ENCODE measurements at regions of chr5 and their contacts with region 1.

Region 1: DNA sequence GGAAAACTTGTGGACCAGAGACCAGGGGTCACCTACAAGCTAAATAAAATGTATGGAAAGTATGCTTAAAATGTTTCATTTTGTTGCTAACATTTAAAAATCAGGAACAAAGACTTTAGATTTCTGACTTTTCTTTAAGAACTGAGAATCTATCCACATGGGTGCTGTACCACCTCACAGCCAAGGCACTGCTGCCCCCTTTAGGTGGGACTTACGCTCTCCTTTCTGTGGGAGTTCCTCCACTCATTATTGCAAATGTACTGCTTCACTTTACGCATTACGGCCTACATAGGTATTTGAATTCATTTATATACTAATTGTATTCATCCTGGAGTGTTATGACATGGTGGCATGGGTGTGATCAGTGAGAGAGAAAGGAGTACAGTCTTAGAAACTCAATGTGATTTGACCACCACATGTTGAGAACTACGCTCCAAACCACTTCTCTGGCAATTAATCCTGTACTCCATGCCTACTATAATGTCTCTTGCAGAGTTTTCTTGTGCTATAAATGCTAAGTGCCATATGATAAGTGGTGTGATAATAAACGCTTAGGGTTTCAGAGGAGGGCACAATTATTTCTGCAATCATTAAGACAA is 24.7 kb upstream of the CETN3 start:
- DNase-seq: peak; percentile 11
- H3K27ac ChIP-seq: no peak overlapping the region
- CTCF ChIP-seq: peak; percentile 53

Region 2: GRCh38 chr5:90529194-90529938 is 95.2 kb after region 1 on chr5 and contains the start of gene LYSMD3:
- CTCF ChIA-PET with region 1: interaction called, 12 read pairs
- POLR2A ChIA-PET with region 1: no interaction called
- DNase-seq: peak; percentile 100
- H3K27ac ChIP-seq: peak within 1 kb of the TSS; percentile 82
- CTCF ChIP-seq: no peak

Measured in RWPE1 (cell line).